CD8-positive, alpha-beta T cell (primary cell): ENCODE measurements at regions of chr12 and their contacts with region 1.

Region 1: DNA sequence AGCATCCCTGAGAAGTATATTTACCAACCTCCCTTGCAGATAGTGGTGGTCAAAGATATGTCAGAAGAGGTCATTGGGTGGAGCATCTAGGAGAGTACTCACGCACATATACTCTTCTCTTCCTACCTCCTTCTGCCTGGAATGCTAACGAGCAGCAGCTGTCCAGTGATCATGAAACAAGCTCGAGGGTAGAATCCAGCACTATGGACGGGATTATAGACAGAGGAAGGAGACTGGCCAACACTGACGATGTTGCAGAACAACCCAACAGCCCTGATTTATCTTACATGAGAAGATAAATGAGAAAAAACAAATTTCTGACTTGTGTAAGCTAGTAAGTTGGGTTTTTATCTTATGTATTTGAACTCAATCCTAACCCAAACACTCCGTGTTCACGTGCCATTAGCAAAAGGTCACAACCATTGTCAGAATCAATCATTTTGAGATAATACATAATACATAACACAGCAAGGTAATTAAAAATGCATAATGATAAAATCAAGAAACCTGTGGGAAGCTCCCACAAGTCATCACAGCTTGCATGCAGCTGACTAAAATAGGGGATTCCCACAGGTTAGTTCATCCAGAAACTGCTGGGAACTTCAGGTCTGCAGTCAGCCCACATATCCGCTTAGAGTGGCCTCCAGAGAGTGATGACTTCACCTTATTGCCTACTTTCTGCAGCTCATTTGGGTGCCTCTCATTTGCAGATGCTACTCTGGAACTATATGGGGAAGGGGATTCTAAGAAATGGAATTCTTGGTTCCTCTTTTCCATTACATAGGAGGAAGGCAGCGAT is 36.3 kb upstream of the STK38L start:
- DNase-seq: no peak
- ATAC-seq: no peak
- H3K4me3 ChIP-seq: no peak overlapping the region
- H3K4me3 Mint-ChIP-seq: no peak overlapping the region
- H3K27ac ChIP-seq: no peak overlapping the region
- H3K27ac Mint-ChIP-seq: no peak overlapping the region
- H3K4me1 ChIP-seq: no peaks in the 10 kb centered on the region
- H3K4me1 Mint-ChIP-seq: no peaks in the 10 kb centered on the region
- H3K27me3 ChIP-seq: no peaks in the 10 kb centered on the region
- H3K27me3 Mint-ChIP-seq: no peaks in the 10 kb centered on the region
- CTCF ChIP-seq: no peak

Region 2: DNA sequence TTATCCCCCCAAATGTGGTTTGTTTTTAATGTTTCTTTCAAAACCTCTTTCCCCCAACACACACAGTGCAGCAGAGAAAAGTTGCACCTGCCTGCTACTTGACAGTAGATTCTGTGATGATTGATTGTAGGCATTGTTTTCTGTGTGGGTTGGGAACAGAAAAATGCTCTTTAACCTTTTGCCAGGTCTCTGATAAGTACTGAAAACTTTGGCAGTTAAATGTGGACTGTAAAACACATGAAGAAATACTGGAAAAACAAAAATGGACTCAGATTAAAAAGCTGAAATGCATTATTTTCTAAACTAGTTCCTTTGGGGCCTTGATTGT is 64.9 kb after region 1 on chr12:
- CTCF ChIA-PET with region 1: no interaction called
- POLR2A ChIA-PET with region 1: no interaction called
- intact Hi-C with region 1: loop called in 1 of 2 experiments (anchors 5 kb)
- DNase-seq: no peak
- ATAC-seq: no peak
- H3K4me3 ChIP-seq: no peak overlapping the region
- H3K4me3 Mint-ChIP-seq: no peak overlapping the region
- H3K27ac ChIP-seq: no peak overlapping the region
- H3K27ac Mint-ChIP-seq: no peak overlapping the region
- H3K4me1 ChIP-seq: no peaks in the 10 kb centered on the region
- H3K4me1 Mint-ChIP-seq: peaks cover 32% of the 10 kb centered on the region
- H3K27me3 ChIP-seq: no peaks in the 10 kb centered on the region
- H3K27me3 Mint-ChIP-seq: no peaks in the 10 kb centered on the region
- CTCF ChIP-seq: no peak

Region 3: DNA sequence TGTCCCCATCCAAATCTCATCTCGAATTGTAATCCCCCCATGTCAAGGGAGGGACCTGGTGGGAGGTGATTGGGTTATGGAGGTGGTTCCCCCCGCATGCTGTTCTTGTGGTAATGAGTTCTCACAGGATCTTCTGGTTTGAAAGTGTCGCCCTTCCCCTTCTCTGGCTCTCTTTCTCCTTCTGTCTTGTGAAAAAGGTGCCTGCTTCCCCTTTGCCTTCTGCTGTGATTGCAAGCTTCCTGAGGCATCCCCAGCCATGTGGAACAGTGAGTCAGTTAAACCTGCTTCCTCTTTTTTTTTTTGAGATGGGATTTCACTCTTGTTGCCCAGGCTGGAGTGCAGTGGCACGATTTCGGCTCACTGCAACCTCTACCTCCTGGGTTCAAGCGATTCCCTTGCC is 1086.5 kb after region 1 on chr12:
- CTCF ChIA-PET with region 1: no interaction called
- POLR2A ChIA-PET with region 1: no interaction called
- intact Hi-C with region 1: no loop called
- DNase-seq: no peak
- ATAC-seq: no peak
- H3K4me3 ChIP-seq: no peak overlapping the region
- H3K4me3 Mint-ChIP-seq: no peak overlapping the region
- H3K27ac ChIP-seq: no peak overlapping the region
- H3K27ac Mint-ChIP-seq: no peak overlapping the region
- H3K4me1 ChIP-seq: no peaks in the 10 kb centered on the region
- H3K4me1 Mint-ChIP-seq: peaks cover 15% of the 10 kb centered on the region
- H3K27me3 ChIP-seq: no peaks in the 10 kb centered on the region
- H3K27me3 Mint-ChIP-seq: no peaks in the 10 kb centered on the region
- CTCF ChIP-seq: no peak